ENCODE measurements at regions of chr12 and their contacts with region 1.

Region 1: DNA sequence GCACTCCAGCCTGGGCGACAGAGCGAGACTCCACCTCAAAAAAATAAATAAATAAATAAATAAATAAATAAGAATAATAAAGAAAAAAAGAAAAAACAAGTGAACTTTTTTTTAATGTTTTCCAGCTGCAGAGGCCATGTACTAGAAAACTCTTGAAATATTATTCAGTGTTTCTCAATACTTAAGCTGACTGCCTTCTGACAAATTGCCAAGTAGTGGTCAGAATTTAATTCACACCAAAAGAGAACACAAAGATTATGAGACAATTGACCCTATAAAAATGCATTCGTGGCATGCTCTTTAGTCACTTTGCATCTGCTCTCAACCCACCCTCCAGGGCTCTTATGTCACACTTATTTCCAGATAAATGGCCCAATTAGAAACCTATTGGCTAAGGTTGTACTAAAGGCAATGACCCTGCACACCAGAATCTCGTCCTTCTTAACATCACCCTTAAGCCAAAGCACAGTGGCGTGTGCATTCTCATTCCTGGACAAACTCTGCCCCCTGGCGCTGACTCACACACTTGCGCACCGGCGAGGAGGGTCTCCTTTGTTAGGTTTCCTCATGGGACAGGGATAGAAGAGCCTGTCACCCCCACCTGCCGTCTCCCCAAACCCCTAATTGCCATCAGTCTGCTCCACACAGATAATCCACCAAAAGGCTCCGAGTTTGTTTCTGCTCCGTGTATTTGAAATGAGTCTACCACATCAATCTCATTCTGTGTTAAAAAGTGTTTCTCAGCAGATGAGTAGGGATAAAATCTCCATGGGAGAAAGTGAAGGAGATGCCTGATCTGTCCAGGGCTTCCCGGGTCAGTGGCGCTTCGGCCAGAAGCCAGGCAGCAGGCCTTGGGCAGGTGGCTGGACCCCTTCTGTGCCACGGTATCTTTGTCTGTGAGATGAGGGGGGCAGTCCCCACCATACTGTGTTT is 73.1 kb upstream of the CEP83 start:
- DNase-seq: peak; percentile 36
- ATAC-seq: peak; percentile 99
- H3K4me3 ChIP-seq: no peak overlapping the region
- H3K27ac ChIP-seq: no peak overlapping the region
- H3K4me1 ChIP-seq: no peaks in the 10 kb centered on the region
- H3K27me3 ChIP-seq: no peaks in the 10 kb centered on the region; a peak in 1 of 4 replicates
- CTCF ChIP-seq: peak; percentile 83 to 89 (median 86)
- EP300 ChIP-seq: no peak
- POLR2A ChIP-seq: no peak
- RAD21 ChIP-seq: peak; percentile 99

Region 2: GRCh38 chr12:94140556-94140955 is 392.2 kb before region 1 on chr12:
- CTCF ChIA-PET with region 1: interaction called, 49 read pairs
- POLR2A ChIA-PET with region 1: no interaction called
- RAD21 ChIA-PET with region 1: interaction called, 24 read pairs
- SMC1A ChIA-PET with region 1: interaction called, 23 read pairs
- in situ Hi-C with region 1: loop called (anchors 5 kb)
- intact Hi-C with region 1: loop called (anchors 1 kb)
- DNase-seq: no peak
- ATAC-seq: peak; percentile 83
- H3K4me3 ChIP-seq: no peak overlapping the region
- H3K27ac ChIP-seq: no peak overlapping the region
- H3K4me1 ChIP-seq: no peaks in the 10 kb centered on the region; the same call in 1 of the 2 replicates
- H3K27me3 ChIP-seq: no peaks in the 10 kb centered on the region
- CTCF ChIP-seq: peak; percentile 50 to 54 (median 54)
- EP300 ChIP-seq: no peak
- POLR2A ChIP-seq: no peak
- RAD21 ChIP-seq: peak; percentile 72

Region 3: GRCh38 chr12:94326727-94327126 is 206.0 kb before region 1 on chr12:
- CTCF ChIA-PET with region 1: interaction called, 8 read pairs
- POLR2A ChIA-PET with region 1: no interaction called
- RAD21 ChIA-PET with region 1: interaction called, 3 read pairs
- SMC1A ChIA-PET with region 1: interaction called, 9 read pairs
- in situ Hi-C with region 1: loop called (anchors 5 kb)
- intact Hi-C with region 1: loop called (anchors 2 kb)
- DNase-seq: no peak
- ATAC-seq: no peak
- H3K4me3 ChIP-seq: no peak overlapping the region
- H3K27ac ChIP-seq: no peak overlapping the region
- H3K4me1 ChIP-seq: no peaks in the 10 kb centered on the region
- H3K27me3 ChIP-seq: no peaks in the 10 kb centered on the region
- CTCF ChIP-seq: no peak
- EP300 ChIP-seq: no peak
- POLR2A ChIP-seq: no peak
- RAD21 ChIP-seq: no peak

Region 4: DNA sequence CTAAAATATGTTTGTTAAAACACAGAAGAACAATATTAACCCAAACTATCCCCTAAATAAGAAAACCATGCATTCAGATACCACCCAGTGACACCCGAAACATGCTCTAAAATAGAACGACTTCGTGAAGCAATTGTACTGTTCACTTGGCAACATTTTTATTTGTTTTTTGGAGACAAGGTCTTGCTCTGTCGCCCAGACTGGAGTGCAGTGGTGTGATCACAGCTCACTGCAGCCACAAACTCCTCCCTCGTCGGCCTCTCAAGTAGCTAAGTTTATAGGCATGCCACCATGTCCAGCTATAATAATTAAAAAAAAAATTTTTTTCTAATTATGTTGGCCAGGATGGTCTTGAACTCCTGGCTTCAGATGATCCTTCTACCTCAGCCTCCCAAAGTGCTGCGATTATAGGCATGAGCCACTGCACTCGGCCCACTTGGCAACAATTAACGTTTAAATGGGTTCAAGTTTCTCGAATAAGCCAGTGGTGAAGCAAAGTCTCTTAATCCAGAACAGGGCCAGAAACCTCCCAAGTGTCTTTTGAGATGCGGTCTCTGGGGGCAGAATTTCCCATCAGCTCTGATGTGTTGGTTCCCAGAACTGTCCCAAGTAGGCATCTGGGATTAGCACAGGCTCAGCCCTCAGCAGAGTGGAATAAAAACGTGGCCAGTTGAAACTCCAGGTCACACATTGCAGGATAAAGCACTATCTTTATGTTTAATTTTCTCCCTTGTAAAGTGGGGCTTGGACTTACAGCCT is 43.1 kb after region 1 on chr12:
- CTCF ChIA-PET with region 1: no interaction called
- POLR2A ChIA-PET with region 1: no interaction called
- RAD21 ChIA-PET with region 1: no interaction called
- SMC1A ChIA-PET with region 1: no interaction called
- in situ Hi-C with region 1: no loop called
- intact Hi-C with region 1: no loop called
- DNase-seq: no peak
- ATAC-seq: no peak
- H3K4me3 ChIP-seq: no peak overlapping the region
- H3K27ac ChIP-seq: no peak overlapping the region
- H3K4me1 ChIP-seq: no peaks in the 10 kb centered on the region
- H3K27me3 ChIP-seq: no peaks in the 10 kb centered on the region
- CTCF ChIP-seq: no peak
- EP300 ChIP-seq: no peak
- POLR2A ChIP-seq: no peak
- RAD21 ChIP-seq: no peak

Region 5: GRCh38 chr12:95014554-95014953 is 481.8 kb after region 1 on chr12:
- CTCF ChIA-PET with region 1: no interaction called
- POLR2A ChIA-PET with region 1: no interaction called
- RAD21 ChIA-PET with region 1: no interaction called
- SMC1A ChIA-PET with region 1: no interaction called
- in situ Hi-C with region 1: no loop called
- intact Hi-C with region 1: no loop called
- DNase-seq: no peak
- ATAC-seq: no peak
- H3K4me3 ChIP-seq: no peak overlapping the region
- H3K27ac ChIP-seq: no peak overlapping the region
- H3K4me1 ChIP-seq: no peaks in the 10 kb centered on the region
- H3K27me3 ChIP-seq: no peaks in the 10 kb centered on the region
- CTCF ChIP-seq: no peak
- EP300 ChIP-seq: no peak
- POLR2A ChIP-seq: no peak
- RAD21 ChIP-seq: no peak